ENCODE measurements at regions of chr17 and their contacts with region 1.

Region 1: DNA sequence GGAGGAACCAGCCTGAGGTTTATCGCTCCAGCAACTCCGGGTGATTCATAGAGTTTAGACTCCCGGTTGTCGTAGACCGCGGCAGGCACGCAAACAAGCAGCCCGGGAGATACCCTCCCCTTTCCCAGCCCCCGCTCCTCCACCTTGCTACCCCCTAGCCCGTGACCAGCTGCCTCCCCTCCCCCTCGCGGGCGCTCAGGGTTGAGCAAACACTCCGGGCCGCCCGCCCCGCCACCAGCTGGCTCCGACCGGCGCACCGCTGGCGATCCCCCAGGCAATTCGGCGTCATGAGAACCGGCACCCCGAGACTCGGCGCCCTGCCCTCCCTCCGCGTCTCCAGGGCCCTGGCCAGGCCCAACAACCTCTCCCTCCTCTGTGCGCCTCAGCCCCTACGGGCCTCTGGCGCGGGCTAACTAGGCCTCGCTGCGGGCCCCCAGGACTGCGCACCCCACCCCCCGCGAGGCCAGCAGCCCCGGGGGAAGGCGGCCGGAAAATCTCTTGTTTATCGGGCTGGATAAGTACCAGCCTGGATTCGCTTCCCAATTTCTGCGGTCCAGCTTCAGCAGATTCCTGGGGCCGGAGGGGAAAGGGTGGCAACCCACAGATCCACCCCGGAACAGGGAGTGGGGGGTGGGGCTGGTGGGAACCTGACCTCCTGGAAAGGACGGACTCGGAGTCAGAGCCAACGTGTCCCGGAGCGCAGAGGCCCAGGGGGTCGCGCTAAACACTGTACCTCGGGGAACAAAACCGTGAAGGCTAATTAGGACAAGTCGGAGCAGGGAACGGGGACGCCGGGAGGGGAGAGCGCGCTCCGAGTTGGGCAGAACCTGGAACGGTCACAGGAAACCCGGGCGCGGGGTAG is 951 bp upstream of the GPRC5C start:
- DNase-seq: peak; percentile 95
- ATAC-seq: peak; percentile 58
- H3K4me3 ChIP-seq: peak overlapping the region; percentile 82 to 94 (median 89)
- H3K27ac ChIP-seq: peak overlapping the region; percentile 98
- H3K4me1 ChIP-seq: peaks cover 69% of the 10 kb centered on the region
- H3K27me3 ChIP-seq: no peaks in the 10 kb centered on the region; a peak in 1 of 5 replicates
- CTCF ChIP-seq: peak; percentile 45
- EP300 ChIP-seq: peak in 1 of 2 experiments; percentile 55; a peak in 2 of 4 replicates
- POLR2A ChIP-seq: peak in 1 of 2 experiments; percentile 61; a peak in 3 of 4 replicates
- RAD21 ChIP-seq: peak; percentile 37

Region 2: DNA sequence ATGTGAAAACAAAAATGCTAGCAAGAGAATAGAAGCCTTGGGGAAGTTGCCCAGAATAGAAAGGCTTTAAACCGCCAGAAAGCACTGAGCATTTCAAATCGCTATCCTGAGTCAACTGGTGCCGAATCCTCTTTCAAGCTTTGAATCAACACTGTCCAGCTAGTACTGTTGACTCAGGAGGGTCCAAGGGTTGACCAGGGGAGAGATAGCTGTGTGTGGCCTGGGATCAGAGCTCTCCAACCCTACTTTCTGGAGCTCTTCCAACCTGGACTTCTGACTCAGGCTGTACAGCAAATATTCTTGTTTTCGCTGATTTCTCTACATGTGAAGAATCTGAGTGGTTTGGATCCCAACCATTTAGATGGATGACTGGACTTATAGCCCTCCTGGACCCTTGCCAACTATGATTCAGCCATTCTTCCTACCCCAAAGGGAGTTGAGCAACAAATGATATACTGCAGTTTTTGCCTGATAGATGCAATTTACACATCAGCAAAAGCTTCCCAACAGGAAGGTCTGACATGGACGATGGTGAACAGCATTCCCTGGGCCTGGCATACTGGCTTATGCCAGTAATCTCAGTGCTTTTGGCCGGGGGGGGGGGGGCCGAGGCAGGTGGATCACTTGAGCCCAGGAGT is 632.7 kb before region 1 on chr17:
- CTCF ChIA-PET with region 1: no interaction called
- POLR2A ChIA-PET with region 1: interaction called, 3 read pairs
- in situ Hi-C with region 1: loop called (anchors 25 kb)
- intact Hi-C with region 1: no loop called
- DNase-seq: peak; percentile 100
- ATAC-seq: peak; percentile 96
- H3K4me3 ChIP-seq: peak overlapping the region in 2 of 3 experiments; percentile 23 to 64; a peak in 2 of 6 replicates
- H3K27ac ChIP-seq: peak overlapping the region; percentile 97
- H3K4me1 ChIP-seq: peaks cover 96% of the 10 kb centered on the region
- H3K27me3 ChIP-seq: no peaks in the 10 kb centered on the region
- CTCF ChIP-seq: no peak
- EP300 ChIP-seq: peak; percentile 94 to 97
- POLR2A ChIP-seq: peak in 1 of 2 experiments; percentile 49; a peak in 1 of 4 replicates
- RAD21 ChIP-seq: peak; percentile 56; the same call in 1 of the 2 replicates

Region 3: DNA sequence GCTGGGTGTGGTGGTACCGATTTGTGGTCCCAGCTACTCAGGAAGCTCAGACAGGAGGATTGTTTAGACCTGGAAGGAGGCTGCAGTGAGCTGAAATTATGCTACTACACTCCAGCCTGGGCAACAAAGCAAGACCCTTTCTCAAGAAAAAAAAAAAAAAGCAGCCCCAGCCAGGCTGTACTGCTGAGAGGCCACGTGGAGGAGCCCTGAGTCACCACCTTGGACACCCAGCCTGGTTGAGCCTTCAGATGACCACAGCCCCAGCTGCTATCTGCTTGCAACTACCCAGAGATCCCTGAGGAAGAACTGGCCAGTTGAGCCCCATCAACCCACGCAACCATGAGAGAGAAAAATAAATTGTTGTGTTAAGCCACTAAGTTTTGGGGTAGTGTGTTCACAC is 22.7 kb before region 1 on chr17:
- CTCF ChIA-PET with region 1: interaction called, 14 read pairs
- POLR2A ChIA-PET with region 1: interaction called, 21 read pairs
- in situ Hi-C with region 1: no loop called
- intact Hi-C with region 1: no loop called
- DNase-seq: peak; percentile 71
- ATAC-seq: peak; percentile 83
- H3K4me3 ChIP-seq: no peak overlapping the region
- H3K27ac ChIP-seq: no peak overlapping the region
- H3K4me1 ChIP-seq: peaks cover 36% of the 10 kb centered on the region
- H3K27me3 ChIP-seq: peaks cover 7 to 28% of the 10 kb centered on the region in 2 experiments; a peak in 4 of 5 replicates
- CTCF ChIP-seq: peak; percentile 76
- EP300 ChIP-seq: no peak
- POLR2A ChIP-seq: no peak
- RAD21 ChIP-seq: peak; percentile 57

Region 4: GRCh38 chr17:74442670-74443515 is 12.0 kb after region 1 on chr17:
- CTCF ChIA-PET with region 1: no interaction called
- POLR2A ChIA-PET with region 1: interaction called, 86 read pairs
- in situ Hi-C with region 1: no loop called
- intact Hi-C with region 1: loop called (anchors 1 kb)
- DNase-seq: peak; percentile 95
- ATAC-seq: peak; percentile 94
- H3K4me3 ChIP-seq: peak overlapping the region; percentile 33 to 72 (median 41)
- H3K27ac ChIP-seq: peak overlapping the region; percentile 96
- H3K4me1 ChIP-seq: peaks cover 37% of the 10 kb centered on the region
- H3K27me3 ChIP-seq: no peaks in the 10 kb centered on the region
- CTCF ChIP-seq: no peak; the same call in 1 of the 2 replicates
- EP300 ChIP-seq: peak; percentile 90 to 93
- POLR2A ChIP-seq: peak; percentile 92 to 97
- RAD21 ChIP-seq: peak; percentile 57

Region 5: GRCh38 chr17:74467221-74467951 is 36.4 kb after region 1 on chr17:
- CTCF ChIA-PET with region 1: no interaction called
- POLR2A ChIA-PET with region 1: no interaction called
- in situ Hi-C with region 1: no loop called
- intact Hi-C with region 1: no loop called
- DNase-seq: no peak
- ATAC-seq: peak; percentile 50
- H3K4me3 ChIP-seq: no peak overlapping the region
- H3K27ac ChIP-seq: no peak overlapping the region
- H3K4me1 ChIP-seq: peaks cover 26% of the 10 kb centered on the region
- H3K27me3 ChIP-seq: peaks cover 0 to 12% of the 10 kb centered on the region in 2 experiments; a peak in 1 of 5 replicates
- CTCF ChIP-seq: no peak
- EP300 ChIP-seq: no peak
- POLR2A ChIP-seq: no peak
- RAD21 ChIP-seq: no peak

Region 6: DNA sequence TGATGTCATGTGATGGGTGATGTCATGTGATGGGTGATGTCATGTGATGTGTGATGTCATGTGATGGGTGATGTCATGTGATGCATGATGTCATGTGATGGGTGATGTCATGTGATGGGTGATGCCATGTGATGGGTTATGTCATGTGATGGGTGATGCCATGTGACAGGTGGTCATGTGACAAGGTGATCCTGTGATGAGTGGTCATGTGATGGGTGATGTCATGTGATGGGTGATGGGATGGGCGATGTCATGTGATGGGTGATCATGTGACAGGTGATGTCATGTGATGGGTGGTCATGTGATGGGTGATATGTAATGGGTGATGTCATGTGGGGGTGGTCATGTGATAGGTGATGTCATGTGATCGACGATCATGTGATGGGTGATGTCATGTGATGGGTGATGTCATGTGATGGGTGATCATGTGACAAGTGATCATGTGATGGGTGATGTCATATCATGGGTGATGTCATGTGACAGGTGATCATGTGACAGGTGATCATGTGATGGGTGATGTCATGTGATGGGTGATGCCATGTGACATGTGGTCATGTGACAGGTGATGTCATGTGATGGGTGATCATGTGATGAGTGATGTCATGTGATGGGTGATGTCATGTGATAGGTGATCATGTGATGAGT is 83.2 kb after region 1 on chr17:
- CTCF ChIA-PET with region 1: no interaction called
- POLR2A ChIA-PET with region 1: no interaction called
- in situ Hi-C with region 1: no loop called
- intact Hi-C with region 1: no loop called
- DNase-seq: peak; percentile 40
- ATAC-seq: no peak
- H3K4me3 ChIP-seq: no peak overlapping the region
- H3K27ac ChIP-seq: no peak overlapping the region
- H3K4me1 ChIP-seq: no peaks in the 10 kb centered on the region
- H3K27me3 ChIP-seq: no peaks in the 10 kb centered on the region
- CTCF ChIP-seq: no peak
- EP300 ChIP-seq: no peak
- POLR2A ChIP-seq: no peak
- RAD21 ChIP-seq: no peak